Activated CD4-positive, alpha-beta memory T cell treated with anti-CD3 and anti-CD28 coated beads for 36 hours (primary cell): ENCODE measurements at regions of chr21 and their contacts with region 1.

Region 1: DNA sequence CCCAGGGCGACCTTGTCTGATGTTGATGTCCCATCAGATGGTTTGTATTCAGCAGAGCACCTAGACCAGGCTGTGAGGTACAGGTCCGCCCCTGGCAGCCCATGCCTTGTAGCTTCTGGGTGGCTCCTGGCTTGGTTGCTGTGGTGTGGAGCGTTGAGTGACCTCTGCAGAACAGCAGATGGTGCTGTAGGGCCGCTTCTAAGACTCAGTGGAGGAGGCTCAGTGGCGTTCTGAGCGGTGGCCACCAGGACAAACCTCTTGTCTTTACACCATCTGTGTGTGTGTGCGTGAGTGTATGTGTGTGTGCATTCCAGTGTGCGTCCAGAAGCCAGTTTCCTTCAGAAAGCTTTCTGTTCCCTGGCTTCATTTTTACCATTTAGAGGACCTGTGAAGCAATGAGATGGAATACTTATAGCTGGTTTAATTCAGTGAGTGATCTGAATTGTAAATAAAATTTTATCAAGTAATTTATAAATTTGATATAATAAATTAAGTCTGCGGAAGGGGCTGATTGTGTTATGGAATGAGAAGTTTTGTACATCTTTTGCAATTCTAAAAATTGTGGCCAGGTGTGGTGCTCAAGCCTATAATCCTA is 66.1 kb downstream of the ADARB1 start:
- DNase-seq: peak; percentile 77
- H3K4me3 Mint-ChIP-seq: no peak overlapping the region
- H3K27ac Mint-ChIP-seq: no peak overlapping the region
- H3K4me1 Mint-ChIP-seq: peaks cover 4% of the 10 kb centered on the region
- H3K27me3 Mint-ChIP-seq: no peaks in the 10 kb centered on the region

Region 2: DNA sequence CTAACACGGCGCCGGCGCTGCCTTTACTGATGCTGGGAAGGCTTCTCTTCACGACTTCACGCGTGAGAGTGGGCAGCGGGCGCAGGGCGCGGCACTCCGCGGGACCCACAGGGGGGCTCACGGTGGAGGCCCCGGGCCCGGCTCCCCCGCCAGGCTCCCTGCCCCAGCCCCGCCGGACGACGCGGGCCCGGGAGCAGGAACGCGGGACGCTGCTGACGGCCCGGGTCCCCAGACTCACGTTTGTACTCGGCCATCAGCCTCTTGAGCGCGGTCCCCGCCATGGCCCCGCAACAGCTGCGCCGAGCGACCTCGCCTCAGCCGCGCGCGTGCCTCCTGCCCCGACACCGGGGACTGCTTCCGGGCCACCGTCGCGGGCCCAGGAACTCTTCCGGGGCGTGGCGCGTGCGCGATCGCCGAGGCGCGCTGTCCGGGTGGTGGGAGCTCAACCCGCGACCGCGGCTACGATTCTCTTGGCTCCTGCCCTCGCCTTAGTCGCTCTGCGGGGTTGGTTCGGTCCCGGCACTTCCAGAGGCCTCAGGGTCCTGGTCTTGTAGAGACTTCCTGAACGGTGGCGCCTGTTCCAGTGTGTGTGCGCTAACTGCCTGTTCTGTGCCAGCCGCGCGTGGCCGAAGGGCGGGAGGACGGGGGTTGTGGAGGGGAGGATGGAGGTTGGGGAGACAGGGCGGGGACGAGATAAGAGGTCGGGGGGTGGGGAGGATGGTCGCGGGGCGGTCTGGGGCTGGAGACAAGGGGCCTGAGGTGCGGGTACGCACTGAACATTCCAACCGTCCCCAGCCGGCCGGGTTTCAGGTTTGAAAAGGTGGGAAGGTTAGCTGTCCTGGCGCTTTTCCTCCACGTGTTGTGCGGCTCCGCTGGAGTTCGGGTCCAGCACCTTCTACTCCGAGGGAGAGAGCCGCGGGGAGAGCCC is 338.7 kb before region 1 on chr21 and contains the start of gene UBE2G2:
- CTCF ChIA-PET with region 1: interaction called, 17 read pairs
- POLR2A ChIA-PET with region 1: no interaction called
- intact Hi-C with region 1: no loop called
- DNase-seq: peak; percentile 91
- H3K4me3 Mint-ChIP-seq: peak within 1 kb of the TSS; percentile 99
- H3K27ac Mint-ChIP-seq: peak within 1 kb of the TSS; percentile 89
- H3K4me1 Mint-ChIP-seq: peaks cover 54% of the 10 kb centered on the region
- H3K27me3 Mint-ChIP-seq: no peaks in the 10 kb centered on the region
- total RNA-seq, gene UBE2G2: 87.6 to 96.0 TPM

Region 3: DNA sequence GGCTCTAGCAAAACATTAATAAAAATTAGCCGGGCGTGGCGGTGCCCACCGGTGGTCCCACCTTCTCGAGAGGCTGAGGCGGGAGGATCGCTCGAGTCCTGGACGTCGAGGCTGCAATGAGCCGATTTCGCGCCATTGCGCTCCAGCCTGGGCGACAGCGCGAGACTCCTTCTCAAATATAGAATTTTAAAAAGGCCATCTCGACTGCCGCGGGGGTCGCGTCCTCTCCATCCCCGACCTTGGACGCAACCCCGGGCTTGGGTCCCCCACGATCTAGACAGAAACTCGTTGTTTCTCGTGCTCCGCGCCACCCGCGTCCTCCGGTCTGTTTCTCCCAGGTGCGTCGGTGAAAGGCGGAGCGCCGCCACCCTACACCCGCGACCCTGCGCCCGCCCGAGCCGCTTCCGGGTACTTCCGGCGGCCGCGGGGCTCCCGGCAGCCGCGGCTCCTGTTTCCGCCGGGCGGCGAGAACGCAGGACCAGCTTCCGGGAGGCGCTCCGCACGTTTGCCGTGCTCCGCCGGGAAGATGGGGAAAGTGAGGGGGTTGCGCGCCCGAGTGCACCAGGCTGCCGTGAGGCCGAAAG is 200.8 kb before region 1 on chr21 and contains the start of gene SLX9:
- CTCF ChIA-PET with region 1: interaction called, 214 read pairs
- POLR2A ChIA-PET with region 1: no interaction called
- intact Hi-C with region 1: no loop called
- DNase-seq: peak; percentile 88
- H3K4me3 Mint-ChIP-seq: peak within 1 kb of the TSS; percentile 82
- H3K27ac Mint-ChIP-seq: peak within 1 kb of the TSS; percentile 79
- H3K4me1 Mint-ChIP-seq: peaks cover 36% of the 10 kb centered on the region
- H3K27me3 Mint-ChIP-seq: no peaks in the 10 kb centered on the region
- total RNA-seq, gene SLX9: 60.7 to 64.6 TPM

Region 4: GRCh38 chr21:44958471-44959191 is 181.8 kb before region 1 on chr21:
- CTCF ChIA-PET with region 1: interaction called, 214 read pairs
- POLR2A ChIA-PET with region 1: no interaction called
- intact Hi-C with region 1: no loop called
- DNase-seq: no peak
- H3K4me3 Mint-ChIP-seq: no peak overlapping the region
- H3K27ac Mint-ChIP-seq: no peak overlapping the region
- H3K4me1 Mint-ChIP-seq: no peaks in the 10 kb centered on the region
- H3K27me3 Mint-ChIP-seq: no peaks in the 10 kb centered on the region

Region 5: DNA sequence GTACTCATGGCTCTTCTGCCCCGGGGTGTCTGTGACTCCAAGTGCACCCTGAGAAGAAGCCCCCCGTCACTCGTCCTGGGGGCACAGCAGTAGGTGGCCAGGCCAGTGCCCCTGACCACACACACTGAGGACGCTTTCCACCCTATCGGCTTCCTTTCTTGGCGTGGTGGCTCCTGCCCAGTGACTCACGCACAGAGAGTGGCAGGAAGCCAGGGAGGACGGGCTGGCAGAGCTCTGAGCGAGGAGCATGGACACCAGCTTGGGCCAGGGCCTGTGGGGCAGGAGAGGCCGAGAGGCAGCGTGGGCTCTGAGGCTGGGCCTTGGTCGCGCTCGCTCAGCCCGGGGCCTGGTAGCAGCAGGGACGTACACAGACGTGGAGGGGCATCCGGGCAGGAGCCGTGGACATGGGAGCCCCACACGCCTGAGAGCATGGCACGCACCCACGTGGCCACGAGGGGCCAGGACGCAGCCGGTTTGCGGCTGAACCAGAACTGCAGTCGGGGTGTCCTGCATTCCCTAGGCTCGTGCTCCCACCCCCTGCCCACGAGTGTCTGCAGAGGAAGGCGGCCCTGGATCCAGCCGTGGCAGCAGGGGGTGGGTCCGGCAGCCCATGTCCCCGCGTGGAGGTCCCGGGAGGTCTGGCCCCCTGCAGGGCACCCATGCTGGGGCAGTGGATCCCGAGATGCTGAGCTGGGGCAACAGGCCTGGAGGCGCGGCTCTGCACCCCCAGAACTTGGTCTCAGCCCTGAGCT is 139.3 kb before region 1 on chr21:
- CTCF ChIA-PET with region 1: no interaction called
- POLR2A ChIA-PET with region 1: no interaction called
- intact Hi-C with region 1: no loop called
- DNase-seq: no peak
- H3K4me3 Mint-ChIP-seq: no peak overlapping the region
- H3K27ac Mint-ChIP-seq: no peak overlapping the region
- H3K4me1 Mint-ChIP-seq: peaks cover 6% of the 10 kb centered on the region
- H3K27me3 Mint-ChIP-seq: peaks cover 2% of the 10 kb centered on the region

Region 6: DNA sequence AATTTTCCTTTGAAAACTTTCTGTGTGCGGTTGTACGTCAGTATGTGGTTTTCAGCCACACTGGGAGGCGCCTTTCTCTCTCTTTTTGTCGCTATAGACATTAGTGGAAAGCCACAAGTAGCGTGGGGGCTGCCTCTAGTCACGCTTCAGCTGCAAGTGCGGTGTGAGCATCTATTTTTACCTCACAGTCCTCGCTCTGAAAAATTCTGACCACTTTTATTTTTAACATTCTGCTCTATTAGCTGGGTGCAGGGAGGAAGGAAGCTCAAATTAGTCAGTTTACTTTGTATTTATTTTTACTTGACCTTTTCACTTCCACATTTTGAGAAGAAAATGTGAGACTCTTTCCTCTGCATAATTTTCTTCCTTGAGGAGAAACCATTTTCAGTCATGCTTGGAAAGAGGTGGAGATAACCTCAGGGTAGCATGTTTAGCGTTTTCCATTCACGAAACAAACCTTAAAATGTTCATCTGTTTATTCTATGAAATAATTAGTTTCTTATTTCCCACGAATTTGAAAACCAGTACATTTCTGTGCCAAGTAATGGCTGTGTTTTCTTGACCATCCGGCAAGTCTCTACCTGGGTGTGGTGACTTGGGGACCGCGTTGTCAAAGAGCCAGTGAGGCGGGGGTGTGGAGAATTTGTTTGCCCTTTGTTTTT is 30.5 kb before region 1 on chr21:
- CTCF ChIA-PET with region 1: interaction called, 19 read pairs
- POLR2A ChIA-PET with region 1: interaction called, 3 read pairs
- intact Hi-C with region 1: no loop called
- DNase-seq: peak; percentile 63
- H3K4me3 Mint-ChIP-seq: peak overlapping the region; percentile 61
- H3K27ac Mint-ChIP-seq: peak overlapping the region; percentile 25
- H3K4me1 Mint-ChIP-seq: peaks cover 61% of the 10 kb centered on the region
- H3K27me3 Mint-ChIP-seq: no peaks in the 10 kb centered on the region

Region 7: DNA sequence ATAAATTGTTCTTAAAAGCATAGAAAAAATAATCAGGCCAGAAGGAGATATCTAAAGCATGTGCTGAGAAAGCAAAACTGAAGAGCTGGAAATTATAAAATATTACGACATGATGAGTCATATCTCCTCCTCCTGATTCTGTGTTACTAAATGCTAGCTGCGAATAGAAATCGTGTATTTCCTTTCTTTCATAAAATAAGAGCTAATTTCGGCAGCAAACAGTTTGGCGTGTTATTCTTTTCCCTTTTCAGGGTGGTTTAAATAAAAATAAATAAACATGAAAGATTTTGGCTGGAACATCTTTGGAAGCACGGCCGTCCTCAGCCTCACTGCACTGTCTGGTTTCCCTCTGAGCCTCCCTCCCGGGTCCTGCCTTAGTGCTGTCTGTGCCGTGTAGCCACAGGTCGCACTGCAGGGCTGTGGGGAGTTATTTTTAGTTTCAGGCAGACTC is 10.1 kb before region 1 on chr21:
- CTCF ChIA-PET with region 1: interaction called, 166 read pairs
- POLR2A ChIA-PET with region 1: no interaction called
- intact Hi-C with region 1: no loop called
- DNase-seq: no peak
- H3K4me3 Mint-ChIP-seq: no peak overlapping the region
- H3K27ac Mint-ChIP-seq: no peak overlapping the region
- H3K4me1 Mint-ChIP-seq: peaks cover 23% of the 10 kb centered on the region
- H3K27me3 Mint-ChIP-seq: no peaks in the 10 kb centered on the region

Region 8: GRCh38 chr21:45167796-45168222 is 27.4 kb after region 1 on chr21:
- CTCF ChIA-PET with region 1: interaction called, 36 read pairs
- POLR2A ChIA-PET with region 1: no interaction called
- intact Hi-C with region 1: no loop called
- DNase-seq: no peak
- H3K4me3 Mint-ChIP-seq: no peak overlapping the region
- H3K27ac Mint-ChIP-seq: no peak overlapping the region
- H3K4me1 Mint-ChIP-seq: peaks cover 30% of the 10 kb centered on the region
- H3K27me3 Mint-ChIP-seq: no peaks in the 10 kb centered on the region

Region 9: DNA sequence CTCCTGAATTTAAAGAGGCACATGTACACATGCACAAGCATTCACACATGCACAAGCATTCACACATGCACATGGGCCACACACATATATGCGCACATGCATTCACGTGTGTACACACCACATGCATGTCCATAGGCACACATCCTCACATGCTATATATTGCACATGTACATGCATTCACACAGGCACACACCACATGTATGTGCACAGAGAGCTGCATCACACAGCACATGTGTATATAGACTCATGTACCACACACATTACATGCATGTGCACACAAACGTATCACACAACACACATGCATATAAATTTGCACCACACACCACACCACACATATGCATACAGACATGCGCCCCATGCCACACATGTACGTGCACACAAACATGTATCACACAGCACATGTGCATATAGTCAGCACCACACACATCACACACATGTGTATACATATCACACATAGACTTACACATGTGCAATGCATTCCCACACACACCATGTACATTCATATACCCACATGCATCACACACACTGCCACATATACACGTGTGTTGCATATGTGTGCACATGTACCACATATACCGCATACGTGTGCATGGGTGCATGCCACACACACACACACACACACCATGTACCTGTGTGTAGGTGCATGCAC is 209.9 kb after region 1 on chr21:
- CTCF ChIA-PET with region 1: no interaction called
- POLR2A ChIA-PET with region 1: no interaction called
- intact Hi-C with region 1: no loop called
- DNase-seq: no peak
- H3K4me3 Mint-ChIP-seq: no peak overlapping the region
- H3K27ac Mint-ChIP-seq: no peak overlapping the region
- H3K4me1 Mint-ChIP-seq: no peaks in the 10 kb centered on the region
- H3K27me3 Mint-ChIP-seq: peaks cover 6% of the 10 kb centered on the region

Region 10: DNA sequence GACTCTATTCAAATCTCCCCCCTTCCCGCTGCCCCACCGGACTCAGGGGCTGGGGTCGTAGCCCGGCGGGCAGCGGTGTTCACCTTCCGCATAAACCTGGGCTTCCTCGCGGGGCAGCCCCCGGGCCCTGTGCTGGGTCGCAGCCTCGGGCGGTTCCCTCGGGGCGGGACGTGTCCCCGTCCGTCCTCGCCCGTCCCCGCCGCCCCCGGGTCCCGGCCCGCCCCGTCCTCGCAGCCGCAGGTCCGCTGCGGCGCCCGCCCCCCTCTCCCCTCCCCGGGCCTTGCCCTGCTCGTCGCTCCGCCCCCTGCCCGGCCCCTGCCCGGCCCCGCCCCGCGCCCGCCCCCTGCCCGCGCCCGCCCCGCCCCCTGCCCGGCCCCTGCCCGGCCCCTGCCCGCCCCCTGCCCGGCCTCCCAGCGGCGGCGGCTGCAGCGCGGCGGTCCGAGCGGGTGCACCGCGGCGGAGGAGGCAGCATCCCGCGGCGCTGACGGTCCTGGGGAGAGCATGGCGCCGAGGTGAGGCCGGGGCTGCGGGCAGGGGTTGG is 264.4 kb after region 1 on chr21 and contains the start of gene COL18A1:
- CTCF ChIA-PET with region 1: no interaction called
- POLR2A ChIA-PET with region 1: no interaction called
- intact Hi-C with region 1: no loop called
- DNase-seq: peak; percentile 48
- H3K4me3 Mint-ChIP-seq: peak within 1 kb of the TSS; percentile 63
- H3K27ac Mint-ChIP-seq: no peak within 1 kb of the TSS
- H3K4me1 Mint-ChIP-seq: peaks cover 6% of the 10 kb centered on the region
- H3K27me3 Mint-ChIP-seq: peaks cover 63% of the 10 kb centered on the region
- total RNA-seq, gene COL18A1: 4.5 TPM